ENCODE measurements at regions of chr7 and their contacts with region 1.

Region 1: GRCh38 chr7:135672560-135673359 is 10.4 kb downstream of the STMP1 start:
- DNase-seq: peak; percentile 31
- H3K4me3 ChIP-seq: no peak overlapping the region
- CTCF ChIP-seq: peak; percentile 74

Region 2: GRCh38 chr7:135645296-135645904 is 27.4 kb before region 1 on chr7:
- CTCF ChIA-PET with region 1: interaction called, 21 read pairs
- POLR2A ChIA-PET with region 1: no interaction called
- DNase-seq: no peak
- H3K4me3 ChIP-seq: no peak overlapping the region
- CTCF ChIP-seq: peak; percentile 52

Region 3: DNA sequence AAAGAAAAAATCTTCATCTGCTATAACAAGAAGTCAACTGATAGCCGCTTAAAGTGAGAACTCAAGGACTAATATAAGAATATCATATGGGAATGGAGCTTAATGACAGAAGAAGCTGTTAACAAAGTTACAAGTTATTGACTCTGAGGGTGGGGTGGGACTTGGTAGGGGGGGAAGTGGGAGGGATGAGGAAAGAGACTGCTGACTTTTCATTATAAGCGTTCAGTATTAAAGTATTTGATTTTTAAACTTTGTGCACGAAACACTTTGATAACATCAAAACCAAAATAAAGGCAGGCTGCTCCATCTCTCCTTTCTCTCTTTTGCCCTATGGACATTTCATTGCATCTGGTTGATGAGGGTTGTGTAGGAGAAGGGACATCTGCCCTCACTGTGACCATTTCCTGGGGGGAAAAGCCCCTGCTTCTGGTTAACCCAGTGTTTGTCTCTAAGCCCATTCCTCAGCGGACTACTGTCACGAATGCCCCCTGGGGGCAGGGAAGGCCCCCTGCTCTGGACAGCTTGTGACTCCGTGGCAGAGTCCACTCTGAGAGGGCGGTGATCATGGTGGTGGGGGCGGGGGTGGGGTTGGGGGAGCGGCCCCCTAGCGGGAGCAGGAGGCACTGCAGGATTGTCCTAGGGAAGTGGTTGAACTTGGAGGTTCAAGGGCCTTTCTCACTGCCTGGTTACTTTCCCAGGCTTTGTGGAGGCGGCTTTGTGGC is 37.8 kb after region 1 on chr7:
- CTCF ChIA-PET with region 1: interaction called, 38 read pairs
- POLR2A ChIA-PET with region 1: interaction called, 3 read pairs
- DNase-seq: no peak
- H3K4me3 ChIP-seq: no peak overlapping the region
- CTCF ChIP-seq: peak; percentile 31

Region 4: DNA sequence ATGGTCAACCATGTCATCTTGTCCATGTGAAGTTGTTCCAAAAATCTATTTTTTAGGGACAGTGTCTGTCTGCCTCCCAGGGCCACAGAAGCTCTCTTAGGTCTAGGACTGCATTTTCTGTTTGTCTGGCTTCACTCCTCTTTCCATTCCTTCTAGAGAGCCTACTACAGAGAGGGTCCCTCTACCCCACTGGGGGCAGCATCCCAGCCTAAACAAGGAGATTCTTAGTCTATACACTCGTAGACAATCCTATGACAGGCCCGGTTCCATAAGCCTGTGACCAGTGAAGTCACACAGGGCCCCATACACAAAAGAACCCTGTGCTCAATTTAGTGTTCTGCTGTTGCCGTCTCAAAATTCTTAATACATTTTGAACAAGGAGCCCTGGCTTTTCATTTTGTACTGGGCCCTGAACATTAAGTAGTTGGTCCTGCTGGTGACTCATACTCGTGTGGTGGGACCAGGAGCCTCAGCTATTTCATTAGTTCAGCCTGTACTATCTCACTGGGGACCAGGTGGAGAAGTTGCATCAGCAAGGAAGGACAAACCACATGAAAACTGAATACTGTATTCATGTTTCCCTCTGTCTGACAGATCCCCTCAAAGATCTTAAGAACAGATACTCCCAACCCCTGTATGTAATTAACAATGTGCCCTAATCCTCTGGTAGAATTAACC is 99.3 kb after region 1 on chr7:
- CTCF ChIA-PET with region 1: interaction called, 28 read pairs
- POLR2A ChIA-PET with region 1: no interaction called
- DNase-seq: no peak
- H3K4me3 ChIP-seq: no peak overlapping the region
- CTCF ChIP-seq: no peak

Region 5: DNA sequence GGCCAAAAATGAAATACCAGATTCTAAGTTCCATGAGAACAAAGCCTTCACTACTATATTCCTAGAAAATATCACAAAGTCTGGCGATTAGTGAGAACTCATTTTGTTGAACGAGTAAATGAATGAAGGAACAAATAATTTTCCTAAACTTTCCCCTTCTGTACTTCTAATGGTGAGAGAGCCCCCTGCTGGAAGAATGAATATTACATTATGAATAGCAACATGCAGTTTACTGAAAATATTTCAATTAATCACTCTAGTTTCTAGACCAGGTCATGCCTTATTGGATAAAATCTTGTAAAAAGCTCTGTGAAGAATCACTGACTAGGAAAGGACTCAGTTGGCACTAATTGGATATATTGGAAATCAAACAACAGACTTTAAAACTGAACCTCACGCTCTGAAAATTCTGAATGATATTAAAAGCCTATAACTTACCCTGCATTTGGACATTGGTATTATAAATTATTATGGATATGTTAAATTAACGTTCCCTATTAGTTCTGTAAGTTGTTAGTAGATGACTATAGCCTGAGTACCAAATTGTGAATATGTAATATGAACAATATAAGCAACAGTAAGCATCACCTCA is 336.8 kb after region 1 on chr7:
- CTCF ChIA-PET with region 1: interaction called, 52 read pairs
- POLR2A ChIA-PET with region 1: no interaction called
- DNase-seq: no peak
- H3K4me3 ChIP-seq: no peak overlapping the region
- CTCF ChIP-seq: peak; percentile 39